ENCODE measurements at regions of chr12 and their contacts with region 1.

Region 1: DNA sequence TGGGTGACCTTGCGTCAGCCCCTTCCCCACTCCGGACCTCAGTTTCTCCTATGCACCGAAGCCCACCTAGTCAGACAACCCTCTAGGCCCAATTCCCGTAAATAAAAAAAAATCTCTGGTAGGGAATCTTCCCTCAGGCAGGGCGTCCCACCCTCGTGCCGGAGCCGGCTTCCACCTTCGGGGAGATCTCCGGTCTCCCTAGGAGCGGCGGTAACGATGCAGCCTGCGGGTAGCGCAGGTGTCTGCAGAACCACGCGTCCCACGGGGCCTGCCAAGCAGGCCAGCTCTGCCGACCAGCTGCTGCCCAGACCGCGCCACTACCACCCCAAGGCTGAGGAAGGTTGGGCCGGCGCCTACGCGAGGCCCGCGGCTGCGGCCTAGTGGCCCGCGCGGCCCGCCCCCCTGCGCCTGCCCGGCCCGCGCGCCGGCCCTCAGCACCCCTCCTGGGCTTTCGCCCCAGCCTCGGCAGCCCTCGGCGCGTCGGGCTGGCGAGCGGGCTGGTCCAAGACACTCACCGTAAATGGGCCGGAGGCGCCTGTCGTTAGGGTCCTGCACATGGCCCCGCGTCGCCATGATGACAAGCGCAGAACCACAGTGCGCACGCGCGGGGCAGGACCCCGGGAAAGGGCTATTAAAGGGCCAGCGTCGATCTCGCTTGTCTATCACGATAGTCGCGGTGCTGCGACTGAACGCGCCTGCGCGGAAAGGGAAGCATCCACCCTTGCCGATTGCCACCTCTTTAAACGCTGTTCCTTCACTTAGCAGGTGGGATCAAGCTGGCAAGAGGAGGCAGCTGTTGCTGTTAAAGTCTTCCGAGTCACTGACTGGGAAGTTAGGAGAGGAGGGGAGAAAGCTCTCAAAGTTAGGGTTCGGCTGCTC is at the start of gene NAA25:
- DNase-seq: peak; percentile 63 to 91 (median 80)
- ATAC-seq: peak; percentile 87 to 93 (median 88)
- H3K4me3 ChIP-seq: peak within 1 kb of the TSS; percentile 94 to 96
- H3K4me3 Mint-ChIP-seq: peak within 1 kb of the TSS; percentile 97 to 98 (median 97)
- H3K27ac ChIP-seq: peak within 1 kb of the TSS; percentile 76
- H3K27ac Mint-ChIP-seq: peak within 1 kb of the TSS; percentile 97 to 98
- H3K4me1 ChIP-seq: peaks cover 11 to 32% of the 10 kb centered on the region in 2 experiments
- H3K4me1 Mint-ChIP-seq: peaks cover 43 to 49% (median 44%) of the 10 kb centered on the region in 3 donors
- H3K27me3 ChIP-seq: no peaks in the 10 kb centered on the region
- H3K27me3 Mint-ChIP-seq: no peaks in the 10 kb centered on the region
- total RNA-seq, gene NAA25: 25.0 to 41.6 (median 31.0) TPM

Region 2: DNA sequence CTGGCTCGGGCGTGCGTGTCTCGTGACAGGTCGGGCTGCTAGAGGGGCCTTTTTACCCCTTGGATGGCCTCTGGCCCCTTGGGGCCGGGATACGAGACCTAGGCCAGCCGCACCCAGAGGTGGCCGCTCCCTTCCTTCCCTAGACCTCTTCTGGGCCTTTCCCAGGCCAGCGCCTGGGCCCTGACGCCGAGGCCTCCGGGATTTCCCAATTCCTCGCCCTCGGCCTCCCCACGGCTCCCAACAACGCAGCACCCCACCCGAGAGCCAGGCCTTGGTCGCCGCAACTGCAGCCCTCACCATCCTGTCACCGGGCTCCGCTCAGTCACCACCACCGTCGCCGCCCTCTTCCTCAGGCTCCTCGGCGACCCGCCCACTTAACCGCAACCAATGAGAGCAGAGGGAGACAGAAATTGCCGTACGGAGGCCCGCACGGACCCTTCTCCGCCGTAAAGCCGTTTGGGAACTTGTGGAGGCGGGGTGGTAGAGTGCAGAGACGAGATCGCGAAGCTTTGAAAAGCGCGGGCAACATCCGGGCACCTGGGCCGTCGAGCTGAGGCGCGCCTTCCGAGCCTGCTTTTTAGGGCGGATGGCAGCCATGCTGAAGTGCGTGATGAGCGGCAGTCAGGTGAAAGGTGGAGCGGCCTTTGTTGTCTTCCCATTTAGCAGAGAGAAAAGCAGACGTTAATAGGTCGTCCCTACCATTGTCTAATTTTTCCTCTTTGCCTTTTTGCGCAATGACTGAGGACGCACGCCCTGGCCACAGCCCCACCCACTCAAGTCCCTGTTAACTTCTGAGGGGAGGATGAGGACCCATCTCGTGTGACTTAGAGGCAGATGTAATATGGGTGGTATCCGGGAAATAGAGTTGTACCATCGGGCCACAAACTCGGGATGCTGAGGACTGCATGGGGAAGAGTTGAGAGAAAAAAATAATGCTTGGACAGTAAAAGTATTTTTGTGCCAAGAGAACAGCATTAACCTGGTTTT is 1606.4 kb before region 1 on chr12 and contains the starts of genes RAD9B and VPS29:
- CTCF ChIA-PET with region 1: no interaction called
- POLR2A ChIA-PET with region 1: no interaction called
- DNase-seq: peak; percentile 96 to 100 (median 99)
- ATAC-seq: peak; percentile 93 to 96 (median 95)
- H3K4me3 ChIP-seq: peak within 1 kb of the TSS; percentile 74 to 88
- H3K4me3 Mint-ChIP-seq: peak within 1 kb of the TSS; percentile 90 to 99 (median 97)
- H3K27ac ChIP-seq: peak within 1 kb of the TSS; percentile 86
- H3K27ac Mint-ChIP-seq: peak within 1 kb of the TSS; percentile 98
- H3K4me1 ChIP-seq: peaks cover 20% of the 10 kb centered on the region in 2 experiments
- H3K4me1 Mint-ChIP-seq: peaks cover 38 to 45% (median 41%) of the 10 kb centered on the region in 3 donors
- H3K27me3 ChIP-seq: no peaks in the 10 kb centered on the region
- H3K27me3 Mint-ChIP-seq: no peaks in the 10 kb centered on the region
- total RNA-seq, gene RAD9B: 0.18 to 1.6 (median 0.74) TPM in 4 of 5 donors, not detected in the other
- total RNA-seq, gene VPS29: 79.0 to 109 (median 95.4) TPM

Region 3: DNA sequence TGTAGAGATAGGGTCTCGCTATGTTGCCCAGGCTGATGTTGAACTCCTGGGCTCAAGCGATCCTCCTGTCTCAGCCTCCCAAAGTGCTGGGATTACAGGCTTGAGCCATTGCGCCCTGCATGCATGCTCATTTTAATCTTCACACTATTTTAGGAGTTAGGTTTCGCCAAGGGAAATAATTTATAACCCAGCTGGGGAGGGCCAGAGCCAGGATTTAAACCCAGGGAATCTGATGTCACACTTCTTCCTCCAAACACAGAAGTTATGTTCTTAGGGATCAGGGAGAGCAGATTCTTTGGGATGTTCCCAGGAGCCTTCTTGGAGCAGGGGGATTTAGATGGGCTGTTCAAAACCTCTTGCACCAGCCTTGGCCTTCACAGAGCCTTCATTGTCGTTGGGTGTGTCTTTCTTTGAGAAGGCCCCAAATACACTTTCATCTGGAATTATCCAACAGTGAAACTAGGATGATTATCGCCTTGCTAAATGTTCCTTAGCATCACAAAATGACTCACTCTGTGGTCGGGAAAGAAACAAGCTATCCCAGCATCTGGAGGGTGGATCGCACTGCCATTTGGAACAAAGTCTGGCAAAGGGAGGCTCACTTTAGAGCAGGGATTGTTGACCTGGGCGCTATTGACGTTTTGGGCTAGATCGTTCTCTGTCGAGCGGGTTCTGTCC is 1357.5 kb before region 1 on chr12:
- CTCF ChIA-PET with region 1: interaction called in 1 of 2 experiments, 10 read pairs
- POLR2A ChIA-PET with region 1: no interaction called
- DNase-seq: no peak
- ATAC-seq: no peak
- H3K4me3 ChIP-seq: no peak overlapping the region
- H3K4me3 Mint-ChIP-seq: no peak overlapping the region
- H3K27ac ChIP-seq: no peak overlapping the region
- H3K27ac Mint-ChIP-seq: no peak overlapping the region
- H3K4me1 ChIP-seq: no peaks in the 10 kb centered on the region
- H3K4me1 Mint-ChIP-seq: no peaks in the 10 kb centered on the region
- H3K27me3 ChIP-seq: no peaks in the 10 kb centered on the region
- H3K27me3 Mint-ChIP-seq: no peaks in the 10 kb centered on the region

Region 4: GRCh38 chr12:112046003-112046402 is 62.4 kb before region 1 on chr12:
- CTCF ChIA-PET with region 1: no interaction called
- POLR2A ChIA-PET with region 1: interaction called in 1 of 2 experiments, 11 read pairs
- DNase-seq: no peak
- ATAC-seq: no peak
- H3K4me3 ChIP-seq: no peak overlapping the region
- H3K4me3 Mint-ChIP-seq: no peak overlapping the region
- H3K27ac ChIP-seq: no peak overlapping the region
- H3K27ac Mint-ChIP-seq: peak overlapping the region in 1 of 2 donors; percentile 11
- H3K4me1 ChIP-seq: no peaks in the 10 kb centered on the region
- H3K4me1 Mint-ChIP-seq: no peaks in the 10 kb centered on the region
- H3K27me3 ChIP-seq: no peaks in the 10 kb centered on the region
- H3K27me3 Mint-ChIP-seq: no peaks in the 10 kb centered on the region

Region 5: DNA sequence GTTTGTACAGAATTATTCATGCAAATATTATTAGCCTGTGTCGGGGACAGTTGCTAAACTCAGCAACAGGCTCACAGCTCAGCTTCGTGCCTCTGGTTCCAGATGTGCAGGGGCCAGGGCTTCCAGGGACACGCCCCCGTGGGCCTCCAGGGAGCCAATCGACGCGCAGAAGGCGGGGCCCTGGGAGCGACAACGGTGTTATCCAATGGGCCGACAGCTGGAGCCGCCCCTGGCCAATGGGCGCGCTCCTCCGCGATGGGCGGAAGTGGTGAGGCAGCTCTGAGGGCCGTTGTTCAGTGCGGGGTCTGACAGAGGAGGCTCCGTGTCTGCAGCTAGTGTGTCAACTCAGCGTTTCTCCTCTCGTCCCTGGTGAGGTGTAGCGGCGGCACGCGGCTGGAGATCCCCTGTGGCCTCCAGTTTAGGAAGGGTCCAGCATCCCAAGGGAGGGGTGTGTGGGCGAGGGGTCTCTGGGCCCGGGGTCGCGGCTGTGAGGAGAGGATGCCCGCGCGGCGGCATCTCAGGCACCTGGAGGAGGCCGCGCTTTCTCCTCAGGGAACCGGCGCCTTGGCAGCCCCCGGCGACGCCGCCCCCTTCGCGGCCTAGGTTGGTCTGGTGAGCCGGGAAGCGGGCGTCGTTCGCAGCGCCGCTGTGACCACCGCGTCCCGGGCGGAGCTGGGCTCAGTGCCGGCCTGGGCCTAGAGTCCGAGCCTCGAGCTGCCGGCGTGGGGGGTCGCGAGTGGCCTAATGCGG is 17.0 kb after region 1 on chr12 and contains the start of gene TRAFD1:
- CTCF ChIA-PET with region 1: interaction called in 1 of 2 experiments, 12 read pairs
- POLR2A ChIA-PET with region 1: interaction called, 10 to 13 read pairs
- DNase-seq: peak; percentile 91 to 99 (median 97)
- ATAC-seq: peak; percentile 99 to 100 (median 99)
- H3K4me3 ChIP-seq: peak within 1 kb of the TSS; percentile 87 to 95
- H3K4me3 Mint-ChIP-seq: peak within 1 kb of the TSS; percentile 81 to 85 (median 83)
- H3K27ac ChIP-seq: peak within 1 kb of the TSS; percentile 83
- H3K27ac Mint-ChIP-seq: peak within 1 kb of the TSS; percentile 83 to 87
- H3K4me1 ChIP-seq: peaks cover 23 to 44% of the 10 kb centered on the region in 2 experiments
- H3K4me1 Mint-ChIP-seq: peaks cover 36 to 48% (median 43%) of the 10 kb centered on the region in 3 donors
- H3K27me3 ChIP-seq: peaks cover 0 to 3% of the 10 kb centered on the region in 2 experiments
- H3K27me3 Mint-ChIP-seq: no peaks in the 10 kb centered on the region
- total RNA-seq, gene TRAFD1: 26.4 to 39.9 (median 36.9) TPM

Region 6: DNA sequence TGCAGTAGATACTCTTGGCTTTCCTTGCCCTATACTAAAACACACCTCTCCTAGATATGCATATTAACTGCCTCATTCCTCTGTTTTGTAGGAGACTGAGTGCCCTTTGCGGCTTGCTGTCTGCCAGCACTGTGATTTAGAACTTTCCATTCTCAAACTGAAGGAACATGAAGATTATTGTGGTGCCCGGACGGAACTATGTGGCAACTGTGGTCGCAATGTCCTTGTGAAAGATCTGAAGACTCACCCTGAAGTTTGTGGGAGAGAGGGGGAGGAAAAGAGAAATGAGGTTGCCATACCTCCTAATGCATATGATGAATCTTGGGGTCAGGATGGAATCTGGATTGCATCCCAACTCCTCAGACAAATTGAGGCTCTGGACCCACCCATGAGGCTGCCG is 32.3 kb after region 1 on chr12:
- CTCF ChIA-PET with region 1: no interaction called
- POLR2A ChIA-PET with region 1: no interaction called
- DNase-seq: no peak
- ATAC-seq: no peak
- H3K4me3 ChIP-seq: no peak overlapping the region
- H3K4me3 Mint-ChIP-seq: no peak overlapping the region
- H3K27ac ChIP-seq: no peak overlapping the region
- H3K27ac Mint-ChIP-seq: peak overlapping the region; percentile 2 to 46
- H3K4me1 ChIP-seq: no peaks in the 10 kb centered on the region
- H3K4me1 Mint-ChIP-seq: peaks cover 0 to 7% (median 2%) of the 10 kb centered on the region in 3 donors
- H3K27me3 ChIP-seq: no peaks in the 10 kb centered on the region
- H3K27me3 Mint-ChIP-seq: no peaks in the 10 kb centered on the region

Measured in T-cell (primary cell).